Activated naive CD4-positive, alpha-beta T cell treated with anti-CD3 and anti-CD28 coated beads for 36 hours (primary cell): ENCODE measurements at regions of chr6 and their contacts with region 1.

Region 1: DNA sequence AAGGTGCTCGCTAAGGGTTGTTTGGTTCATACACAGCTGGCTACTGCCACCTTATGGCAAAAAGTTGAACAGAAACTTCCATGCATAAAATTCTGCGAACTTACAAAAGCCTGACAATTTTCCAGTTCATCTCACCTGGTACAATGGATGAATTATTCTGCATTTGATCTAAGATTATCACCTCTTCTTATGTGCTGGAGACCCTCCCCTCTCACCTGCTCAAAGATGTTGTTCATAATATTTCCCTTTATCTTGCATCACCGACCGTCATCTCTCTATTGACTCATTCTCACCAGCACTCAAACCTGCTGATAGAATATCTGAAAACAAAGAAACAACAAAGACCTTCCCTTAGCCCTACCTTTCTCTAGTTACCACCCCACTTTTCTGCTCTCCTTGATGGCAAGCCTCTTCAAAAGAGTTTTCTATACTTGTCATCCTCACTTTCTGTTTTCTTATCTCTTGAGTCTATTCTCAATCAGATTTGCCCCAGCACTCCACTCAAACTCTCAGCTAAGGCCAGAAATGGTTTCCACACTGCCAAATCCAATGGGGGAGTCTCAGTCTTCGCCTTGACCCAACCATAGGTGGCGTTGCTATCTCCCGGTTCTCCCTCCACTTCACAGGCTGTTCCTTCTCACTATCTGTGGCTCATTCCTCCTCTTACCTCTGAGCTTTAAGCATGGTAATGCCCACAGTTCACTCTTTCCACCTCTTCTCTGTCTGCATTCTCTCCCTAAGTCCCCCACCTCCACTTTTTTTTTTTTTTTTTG is 25.8 kb downstream of the SNRNP48 start:
- DNase-seq: peak; percentile 58
- H3K4me3 Mint-ChIP-seq: no peak overlapping the region
- H3K27ac Mint-ChIP-seq: no peak overlapping the region
- H3K4me1 Mint-ChIP-seq: peaks cover 14% of the 10 kb centered on the region
- H3K27me3 Mint-ChIP-seq: no peaks in the 10 kb centered on the region

Region 2: GRCh38 chr6:6724539-6725467 is 891.0 kb before region 1 on chr6:
- CTCF ChIA-PET with region 1: no interaction called
- intact Hi-C with region 1: loop called (anchors 2 kb)
- DNase-seq: peak; percentile 82
- H3K4me3 Mint-ChIP-seq: peak overlapping the region; percentile 34
- H3K27ac Mint-ChIP-seq: no peak overlapping the region
- H3K4me1 Mint-ChIP-seq: peaks cover 4% of the 10 kb centered on the region
- H3K27me3 Mint-ChIP-seq: no peaks in the 10 kb centered on the region

Region 3: DNA sequence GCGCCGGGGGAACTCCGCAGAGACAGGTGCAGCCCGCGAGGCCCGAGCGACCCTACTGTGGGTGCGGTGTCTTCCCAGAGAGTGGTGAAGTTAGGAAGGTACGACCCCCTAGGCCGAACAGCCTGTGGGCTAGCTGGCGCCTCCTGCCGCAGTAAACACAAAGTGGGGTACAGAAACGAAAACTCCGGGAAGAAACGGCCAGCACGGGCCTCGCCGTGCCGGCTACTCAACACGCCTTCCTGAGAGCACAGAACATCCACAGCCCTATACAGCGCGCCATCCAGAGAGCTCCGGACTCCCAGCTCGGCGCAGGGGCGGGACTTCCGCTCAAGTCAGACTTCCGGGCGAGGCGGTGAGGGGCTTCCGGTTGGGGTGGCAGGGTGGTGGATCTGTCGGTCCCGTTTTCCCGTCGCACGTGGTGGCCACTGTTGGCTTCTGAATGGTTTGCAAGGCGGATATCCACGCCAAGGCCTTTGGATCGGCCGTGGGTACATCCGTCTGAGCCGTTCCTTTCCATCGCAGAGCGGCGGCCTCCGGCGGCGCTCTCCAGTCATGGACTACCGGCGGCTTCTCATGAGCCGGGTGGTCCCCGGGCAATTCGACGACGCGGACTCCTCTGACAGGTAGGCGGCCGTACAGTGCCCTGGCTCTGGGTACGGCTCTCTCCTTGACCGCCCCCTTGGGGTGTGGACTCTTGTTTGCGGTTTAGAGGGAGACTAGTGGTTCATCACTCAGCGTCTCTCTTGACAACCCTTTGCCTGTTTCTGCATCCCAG is 226.2 kb before region 1 on chr6 and contains the starts of genes CAGE1 and RIOK1:
- CTCF ChIA-PET with region 1: interaction called, 3 read pairs
- intact Hi-C with region 1: loop called (anchors 1 kb)
- DNase-seq: peak; percentile 97
- H3K4me3 Mint-ChIP-seq: peak within 1 kb of the TSS; percentile 94
- H3K27ac Mint-ChIP-seq: peak within 1 kb of the TSS; percentile 97
- H3K4me1 Mint-ChIP-seq: peaks cover 40% of the 10 kb centered on the region
- H3K27me3 Mint-ChIP-seq: no peaks in the 10 kb centered on the region
- total RNA-seq, gene CAGE1: 0.25 to 0.26 TPM
- total RNA-seq, gene RIOK1: 33.8 to 38.5 TPM

Region 4: GRCh38 chr6:7725849-7726415 is 110.1 kb after region 1 on chr6 and contains the start of gene BMP6:
- CTCF ChIA-PET with region 1: interaction called, 4 read pairs
- intact Hi-C with region 1: loop called (anchors 2 kb)
- DNase-seq: peak; percentile 69
- H3K4me3 Mint-ChIP-seq: peak within 1 kb of the TSS; percentile 76
- H3K27ac Mint-ChIP-seq: no peak within 1 kb of the TSS
- H3K4me1 Mint-ChIP-seq: peaks cover 12% of the 10 kb centered on the region
- H3K27me3 Mint-ChIP-seq: peaks cover 65% of the 10 kb centered on the region
- total RNA-seq, gene BMP6: 0.32 to 0.36 TPM

Region 5: GRCh38 chr6:8219352-8219943 is 603.7 kb after region 1 on chr6:
- CTCF ChIA-PET with region 1: no interaction called
- intact Hi-C with region 1: loop called (anchors 2 kb)
- DNase-seq: peak; percentile 66
- H3K4me3 Mint-ChIP-seq: no peak overlapping the region
- H3K27ac Mint-ChIP-seq: no peak overlapping the region
- H3K4me1 Mint-ChIP-seq: no peaks in the 10 kb centered on the region
- H3K27me3 Mint-ChIP-seq: peaks cover 6% of the 10 kb centered on the region